Right ventricle myocardium inferior (tissue), 1 donor: ENCODE measurements at regions of chr1 and their contacts with region 1.

Region 1: GRCh38 chr1:89910780-89911179 is 84.1 kb upstream of the ZNF326 start:
- DNase-seq: no peak
- ATAC-seq: no peak

Region 2: GRCh38 chr1:89873770-89874169 is 37.0 kb before region 1 on chr1:
- intact Hi-C with region 1: loop called (anchors 5 kb)
- DNase-seq: no peak
- ATAC-seq: peak; percentile 42

Region 3: GRCh38 chr1:89994805-89995597 is 84.2 kb after region 1 on chr1 and contains the start of gene ZNF326:
- intact Hi-C with region 1: no loop called
- DNase-seq: peak; percentile 98
- ATAC-seq: peak; percentile 99
- total RNA-seq, gene ZNF326: 17.4 TPM

Region 4: DNA sequence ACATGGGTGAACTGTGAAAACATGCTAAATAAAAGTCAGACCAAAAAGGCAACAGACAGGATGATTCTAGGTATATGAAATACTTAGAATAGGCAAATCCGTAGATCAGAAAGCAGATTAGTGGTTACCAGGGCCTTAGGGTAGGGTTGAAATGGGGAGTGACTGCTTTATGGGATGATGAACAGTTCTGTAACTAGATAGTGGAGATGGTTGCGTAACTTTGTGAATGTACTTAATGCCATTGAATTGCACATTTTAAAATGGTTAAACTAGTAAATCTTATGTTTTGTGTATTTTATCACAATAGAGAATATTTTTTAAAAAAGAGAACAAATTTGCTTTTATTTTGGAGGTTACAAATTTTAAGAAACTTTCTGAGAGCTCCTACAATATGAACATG is 101.5 kb after region 1 on chr1:
- intact Hi-C with region 1: no loop called
- DNase-seq: no peak
- ATAC-seq: no peak